ENCODE measurements at regions of chr7 and their contacts with region 1.

Region 1: DNA sequence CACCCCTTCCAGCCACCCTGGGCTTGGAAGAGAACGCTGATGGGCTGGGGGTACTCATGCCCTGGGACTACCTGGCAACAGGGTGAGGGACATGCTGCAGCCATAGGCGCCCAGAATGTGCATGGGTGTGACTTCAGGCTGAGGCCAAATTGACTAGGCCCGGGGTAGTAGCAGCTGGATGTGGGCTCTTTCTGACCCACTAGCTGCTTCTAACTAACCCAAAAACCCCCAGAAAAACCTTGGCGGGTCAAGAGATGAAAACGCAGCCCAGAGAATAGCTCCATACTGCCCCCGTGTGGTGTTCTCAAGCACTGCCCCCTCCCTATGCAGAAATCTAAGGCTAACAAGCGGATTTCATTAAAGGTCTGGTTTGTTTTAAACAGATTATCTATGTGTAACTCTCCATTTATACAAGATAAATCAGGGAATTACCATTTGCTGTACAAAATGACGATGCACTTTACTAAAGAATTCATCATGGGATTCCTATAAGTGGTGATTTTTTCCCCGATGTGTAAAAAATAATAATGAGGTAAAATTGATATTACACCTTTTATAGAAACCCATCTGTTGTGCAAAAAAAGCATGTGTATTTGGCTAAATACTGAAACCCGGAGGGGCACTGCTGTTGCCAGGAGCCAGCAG is 4.2 kb downstream of the SMARCD3 start:
- DNase-seq: peak; percentile 82
- CTCF ChIP-seq: peak; percentile 70

Region 2: DNA sequence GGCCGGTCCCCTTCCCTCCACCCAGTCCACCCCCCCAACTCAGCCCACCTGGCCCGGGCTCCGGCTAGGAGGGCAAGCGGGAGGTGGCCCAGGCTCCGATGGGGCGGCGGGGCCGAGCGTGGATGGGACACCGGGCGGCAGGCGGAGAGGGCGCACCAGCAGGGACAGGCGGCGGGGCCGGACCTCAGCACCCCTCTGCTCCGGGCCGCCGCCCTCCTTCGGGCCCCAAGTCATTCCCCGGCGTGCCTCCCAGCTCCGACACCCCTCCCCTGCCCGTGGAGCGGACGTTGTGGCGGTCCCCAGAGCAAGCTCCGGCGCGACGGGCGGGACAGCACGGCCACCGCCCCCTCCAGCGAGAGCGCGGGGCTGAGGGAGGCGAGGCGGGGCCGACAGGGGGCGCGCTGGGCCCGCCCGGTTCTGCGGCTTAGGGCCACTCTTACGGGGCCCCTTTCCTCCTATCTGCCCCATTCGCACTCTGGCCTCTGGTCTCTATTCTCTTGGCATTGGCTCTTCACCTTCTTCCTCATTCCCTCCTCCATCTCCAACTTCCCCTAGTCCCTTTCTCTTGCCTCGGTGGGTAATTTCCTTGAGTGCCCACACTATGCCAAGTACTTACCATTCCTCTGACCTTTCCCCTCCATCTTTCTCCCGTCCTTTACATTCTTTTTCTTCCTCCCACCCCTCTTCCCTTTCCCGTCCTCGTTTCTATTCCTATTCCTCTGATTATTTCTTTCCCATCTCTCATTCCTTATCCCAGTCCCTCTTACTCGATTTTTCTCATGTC is 76.1 kb before region 1 on chr7:
- CTCF ChIA-PET with region 1: interaction called, 12 read pairs
- POLR2A ChIA-PET with region 1: no interaction called
- DNase-seq: peak; percentile 79
- CTCF ChIP-seq: peak; percentile 75

Region 3: DNA sequence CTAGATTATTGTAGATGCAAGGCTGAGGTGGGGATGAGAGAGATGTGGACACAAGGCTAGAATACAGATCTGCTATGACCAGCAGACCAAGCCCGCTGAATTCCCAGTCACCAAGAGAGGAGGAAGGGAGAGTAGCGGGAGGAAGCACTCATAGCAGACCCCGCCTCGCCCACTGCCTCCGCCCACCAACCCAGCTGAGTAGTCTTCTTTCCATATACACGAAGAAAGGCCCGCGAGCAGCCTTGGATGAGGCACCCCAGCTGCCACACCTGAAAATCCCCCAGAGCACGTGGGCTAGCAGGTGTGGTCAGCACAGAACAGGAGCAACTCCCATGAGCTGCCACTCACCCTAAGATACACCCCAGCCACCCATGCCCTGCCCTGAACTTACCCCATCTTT is 26.1 kb before region 1 on chr7:
- CTCF ChIA-PET with region 1: interaction called, 47 read pairs
- POLR2A ChIA-PET with region 1: no interaction called
- DNase-seq: no peak
- CTCF ChIP-seq: no peak

Region 4: DNA sequence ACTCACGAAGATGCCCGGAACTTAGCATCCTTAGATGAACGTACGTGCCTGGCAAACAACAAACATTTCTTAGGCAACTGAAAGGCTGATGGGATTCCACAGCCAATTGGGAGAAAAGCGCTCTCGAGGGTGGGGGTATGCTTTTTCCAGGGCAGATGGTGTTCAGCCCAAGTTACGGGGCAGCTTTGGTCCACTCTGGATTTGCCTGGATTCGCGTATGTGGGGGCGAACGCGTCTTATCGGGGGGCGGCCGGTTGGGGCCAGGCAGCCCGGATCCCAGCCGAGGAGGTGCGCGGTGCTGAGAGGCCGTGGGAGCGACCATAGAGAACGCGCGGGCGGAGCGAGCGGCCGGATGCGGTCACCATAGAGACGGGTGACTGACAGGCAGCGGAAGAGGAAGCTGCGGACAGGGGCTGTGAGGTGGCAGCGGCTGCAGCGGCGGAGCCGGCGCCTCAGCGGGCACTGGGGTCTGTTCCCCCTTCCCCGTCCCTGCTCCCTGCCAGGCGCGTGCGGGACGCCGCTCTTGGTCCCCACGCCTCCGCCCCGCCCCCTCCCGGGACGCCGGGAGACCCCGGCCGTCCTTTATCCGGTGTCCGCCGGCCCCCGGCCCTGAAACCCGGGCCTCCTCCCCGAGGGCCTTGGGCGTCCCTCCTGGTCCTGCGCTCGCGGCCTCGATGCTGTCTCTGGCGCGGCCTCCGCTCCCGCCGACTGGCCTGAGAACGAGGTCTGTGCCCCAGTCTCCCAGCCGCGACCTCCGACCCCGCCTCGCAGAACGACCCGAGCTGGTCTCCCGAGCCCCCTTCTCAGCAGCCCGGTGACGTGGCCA is 12.0 kb before region 1 on chr7 and contains the start of gene CHPF2:
- CTCF ChIA-PET with region 1: interaction called, 78 read pairs
- POLR2A ChIA-PET with region 1: interaction called, 13 read pairs
- DNase-seq: peak; percentile 97
- CTCF ChIP-seq: no peak

Region 5: GRCh38 chr7:151261529-151261928 is 17.2 kb after region 1 on chr7:
- CTCF ChIA-PET with region 1: interaction called, 28 read pairs
- POLR2A ChIA-PET with region 1: no interaction called
- DNase-seq: no peak
- CTCF ChIP-seq: no peak

Measured in GM10248 (cell line).